Posterior vena cava (tissue), 2 donors: ENCODE measurements at regions of chr11 and their contacts with region 1.

Region 1: DNA sequence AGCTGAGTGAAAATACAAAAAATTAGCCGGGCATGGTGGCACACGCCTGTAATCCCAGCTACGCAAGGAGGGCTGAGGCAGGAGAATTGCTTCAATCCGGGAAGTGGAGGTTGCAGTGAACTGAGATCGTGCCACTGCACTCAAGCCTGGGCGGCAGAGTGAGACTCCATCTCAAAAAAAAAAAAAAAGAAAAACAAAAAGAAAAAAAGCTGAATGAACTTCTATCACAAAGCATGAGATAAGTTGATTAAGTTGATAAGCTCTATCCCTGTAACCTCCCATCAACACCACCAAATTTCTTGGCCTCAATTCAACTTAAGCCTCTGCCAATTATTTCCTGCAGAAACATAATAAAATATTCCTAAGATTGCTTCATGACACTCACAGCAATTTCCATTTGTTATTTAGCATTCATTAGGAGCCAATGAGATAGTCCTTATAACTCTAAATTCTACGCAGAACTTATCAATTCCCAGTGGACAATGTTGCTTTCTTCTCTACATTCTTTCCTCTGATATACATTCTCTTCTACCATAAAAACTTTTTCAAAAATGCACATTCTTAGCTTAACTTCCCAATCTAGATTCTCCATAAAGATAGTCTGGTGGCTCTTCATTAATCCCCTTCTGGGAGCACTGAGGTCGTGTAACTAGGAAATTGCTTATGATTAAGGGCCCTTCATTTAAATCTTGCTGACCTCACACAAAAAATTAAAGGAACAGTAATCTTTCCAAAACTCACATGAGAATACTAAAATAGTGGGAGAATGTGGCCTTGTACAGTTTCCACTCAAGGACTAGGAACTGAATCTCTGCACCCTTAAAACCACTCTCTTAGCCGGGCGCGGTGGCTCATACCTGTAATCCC is 2.9 kb downstream of the AMBRA1 start:
- DNase-seq: no peak

Region 2: DNA sequence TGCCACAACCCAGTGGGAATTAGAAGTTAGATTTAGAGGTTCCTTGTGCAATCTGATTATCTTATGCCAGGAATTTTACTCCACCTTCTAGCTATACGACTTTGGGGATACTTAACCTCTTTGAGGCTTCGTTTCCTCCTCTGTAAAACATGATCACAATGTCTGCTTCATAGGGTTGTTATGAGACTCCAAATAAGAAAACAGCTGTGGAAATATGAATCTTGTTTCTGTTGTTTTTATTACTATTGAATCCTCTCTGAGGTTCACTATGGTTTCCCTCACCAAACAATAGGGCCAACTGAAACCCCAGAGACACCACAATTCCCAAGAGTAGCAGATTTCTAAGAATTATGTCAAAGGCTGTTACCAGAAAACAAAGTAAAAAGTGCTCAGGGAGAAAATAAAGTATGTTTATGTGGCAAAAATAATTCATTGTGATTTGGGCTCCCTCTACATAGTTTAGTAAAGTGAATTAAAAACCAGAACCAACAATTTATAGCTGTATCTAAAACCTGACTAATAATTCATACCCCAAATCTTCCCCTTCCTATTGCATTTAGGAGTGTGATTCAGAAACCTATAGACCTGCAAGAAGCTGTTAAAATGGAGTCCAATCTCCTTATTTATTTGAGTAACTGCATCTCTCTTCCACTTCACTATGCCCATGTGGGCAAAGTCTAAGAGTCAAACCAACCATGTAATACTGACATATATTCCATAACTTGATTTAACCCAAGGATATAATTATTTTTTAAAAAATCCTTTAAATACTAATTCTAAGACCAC is 35.5 kb before region 1 on chr11:
- intact Hi-C with region 1: loop called in 1 of 2 experiments (anchors 1 kb)
- DNase-seq: no peak